ENCODE measurements at regions of chr14 and their contacts with region 1.

Region 1: GRCh38 chr14:24271134-24271833 is at the start of gene RABGGTA:
- DNase-seq: peak; percentile 90 to 93 (median 92)
- ATAC-seq: peak; percentile 95
- H3K4me3 ChIP-seq: peak within 1 kb of the TSS; percentile 94
- H3K27ac ChIP-seq: peak within 1 kb of the TSS; percentile 99
- H3K4me1 ChIP-seq: peaks cover 26 to 27% of the 10 kb centered on the region in 2 experiments; a peak in 4 of 5 replicates
- H3K27me3 ChIP-seq: no peaks in the 10 kb centered on the region
- CTCF ChIP-seq: peak; percentile 71 to 82 (median 75)
- EP300 ChIP-seq: 0 out of 2 replicates have a peak, but pooled peaks have one; percentile 16
- POLR2A ChIP-seq: peak; percentile 79
- RAD21 ChIP-seq: 0 out of 4 replicates have a peak, but pooled peaks of 1 of the 2 experiments have one; percentile 14
- polyA plus RNA-seq, gene RABGGTA: 20.3 to 24.2 TPM

Region 2: DNA sequence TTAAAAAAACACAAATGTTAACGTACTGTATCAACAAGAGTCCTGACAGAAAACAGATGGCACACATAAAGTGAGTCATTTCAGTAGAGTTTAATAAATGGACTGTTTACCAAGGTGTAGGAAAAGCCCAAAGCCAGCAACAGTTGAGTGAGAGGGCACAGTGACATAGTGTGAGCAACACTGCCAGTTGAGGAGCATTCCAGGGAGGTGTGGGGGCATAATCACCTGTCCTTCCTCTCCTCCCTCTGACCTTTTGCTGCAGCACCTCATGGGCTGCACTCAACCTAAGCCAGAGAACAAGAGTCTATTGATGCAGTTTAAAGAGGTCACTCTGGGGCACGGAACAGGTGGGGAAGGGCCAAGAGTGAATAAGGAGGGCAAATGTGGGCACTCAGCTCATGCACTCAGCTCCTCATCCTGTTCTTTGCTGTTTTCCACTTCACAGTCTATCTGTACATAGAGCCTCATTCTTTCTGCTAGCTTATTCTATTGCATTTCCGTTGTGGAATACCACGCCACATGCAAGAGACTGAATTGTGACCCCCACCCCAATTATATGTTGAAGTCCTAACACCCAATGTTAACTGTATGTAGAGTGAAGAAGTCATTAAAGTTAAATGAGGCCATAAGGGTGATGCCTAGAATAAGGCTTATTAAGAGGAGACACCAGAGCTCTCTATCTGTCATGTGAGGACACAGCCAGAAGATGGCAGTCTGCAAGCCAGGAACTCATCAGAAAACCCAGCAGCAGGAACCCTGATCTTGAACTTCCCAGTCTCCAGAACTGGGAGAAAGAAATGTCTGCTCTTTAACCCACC is 605.7 kb before region 1 on chr14:
- CTCF ChIA-PET with region 1: no interaction called
- POLR2A ChIA-PET with region 1: no interaction called
- in situ Hi-C with region 1: no loop called
- intact Hi-C with region 1: no loop called
- DNase-seq: peak in 2 of 4 experiments; percentile 17 to 43
- ATAC-seq: peak; percentile 82
- H3K4me3 ChIP-seq: no peak overlapping the region
- H3K27ac ChIP-seq: no peak overlapping the region
- H3K4me1 ChIP-seq: no peaks in the 10 kb centered on the region
- H3K27me3 ChIP-seq: peaks cover 0 to 6% of the 10 kb centered on the region in 2 experiments; a peak in 2 of 5 replicates
- CTCF ChIP-seq: peak; percentile 43 to 65 (median 52); a peak in 5 of 6 replicates
- EP300 ChIP-seq: no peak
- POLR2A ChIP-seq: no peak
- RAD21 ChIP-seq: peak; percentile 50 to 70

Region 3: GRCh38 chr14:24241829-24242443 is 29.3 kb before region 1 on chr14:
- CTCF ChIA-PET with region 1: interaction called, 3 read pairs
- POLR2A ChIA-PET with region 1: interaction called, 11 read pairs
- in situ Hi-C with region 1: no loop called
- intact Hi-C with region 1: loop called (anchors 2 kb)
- DNase-seq: peak; percentile 92 to 95 (median 92)
- ATAC-seq: peak; percentile 94
- H3K4me3 ChIP-seq: peak overlapping the region; percentile 59
- H3K27ac ChIP-seq: peak overlapping the region; percentile 98
- H3K4me1 ChIP-seq: peaks cover 13 to 15% of the 10 kb centered on the region in 2 experiments; a peak in 4 of 5 replicates
- H3K27me3 ChIP-seq: no peaks in the 10 kb centered on the region
- CTCF ChIP-seq: peak; percentile 13 to 49 (median 42); a peak in 2 of 6 replicates
- EP300 ChIP-seq: no peak
- POLR2A ChIP-seq: no peak
- RAD21 ChIP-seq: no peak

Measured in K562 (cell line).